ENCODE measurements at regions of chr19 and their contacts with region 1.

Region 1: GRCh38 chr19:33771384-33772101 is 25.1 kb upstream of the KCTD15 start:
- DNase-seq: peak; percentile 78 to 86 (median 83)
- ATAC-seq: peak; percentile 97
- H3K4me3 ChIP-seq: no peak overlapping the region
- H3K27ac ChIP-seq: no peak overlapping the region
- H3K4me1 ChIP-seq: peaks cover 0 to 9% of the 10 kb centered on the region in 2 experiments; a peak in 1 of 5 replicates
- H3K27me3 ChIP-seq: peaks cover 0 to 39% of the 10 kb centered on the region in 2 experiments; a peak in 3 of 5 replicates
- CTCF ChIP-seq: peak; percentile 89 to 94 (median 90)
- EP300 ChIP-seq: no peak
- POLR2A ChIP-seq: no peak
- RAD21 ChIP-seq: peak; percentile 82 to 93

Region 2: DNA sequence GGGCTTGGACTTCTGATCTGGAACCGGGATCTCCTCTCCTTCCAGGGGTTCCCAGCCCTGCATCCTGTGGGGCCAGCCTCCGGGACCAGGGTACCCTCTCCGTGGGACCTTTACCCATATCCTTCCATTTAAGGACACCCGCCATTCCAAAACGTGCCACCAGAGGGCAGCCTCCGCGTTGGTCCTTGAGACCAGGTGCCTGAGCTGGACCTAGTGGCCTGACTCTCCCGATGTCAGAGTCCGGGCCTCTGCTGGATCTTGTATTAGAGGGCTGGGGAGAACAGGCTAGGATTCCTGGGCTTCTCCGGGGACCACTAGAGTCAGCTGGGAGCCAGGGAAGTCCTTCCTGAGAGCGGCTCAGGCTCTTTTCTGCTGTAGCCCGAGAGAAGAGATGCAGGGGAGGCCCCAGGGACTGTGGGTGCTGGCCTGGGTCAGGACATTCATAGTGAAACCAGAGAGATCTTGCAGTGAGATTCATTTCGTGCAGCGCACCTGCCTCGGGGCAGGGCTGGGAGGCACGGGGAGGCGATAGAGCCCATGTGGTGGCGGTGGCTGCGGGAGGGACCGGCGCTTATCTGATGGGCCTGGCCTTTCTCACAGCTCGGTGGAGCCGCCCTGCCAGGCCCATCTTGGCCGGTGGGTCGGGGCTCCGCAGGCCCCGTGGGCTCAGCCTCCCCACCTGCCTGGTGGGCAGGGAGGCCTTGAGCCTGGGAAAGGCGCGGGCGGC is 536.1 kb before region 1 on chr19:
- CTCF ChIA-PET with region 1: no interaction called
- POLR2A ChIA-PET with region 1: no interaction called
- in situ Hi-C with region 1: loop called (anchors 5 kb)
- intact Hi-C with region 1: loop called (anchors 5 kb)
- DNase-seq: peak; percentile 80 to 84 (median 82)
- ATAC-seq: peak; percentile 89
- H3K4me3 ChIP-seq: no peak overlapping the region
- H3K27ac ChIP-seq: no peak overlapping the region
- H3K4me1 ChIP-seq: peaks cover 0 to 10% of the 10 kb centered on the region in 2 experiments; a peak in 2 of 5 replicates
- H3K27me3 ChIP-seq: peaks cover 2 to 39% of the 10 kb centered on the region in 2 experiments; a peak in 3 of 5 replicates
- CTCF ChIP-seq: peak; percentile 85 to 95 (median 91)
- EP300 ChIP-seq: no peak
- POLR2A ChIP-seq: no peak
- RAD21 ChIP-seq: peak; percentile 74 to 85

Region 3: DNA sequence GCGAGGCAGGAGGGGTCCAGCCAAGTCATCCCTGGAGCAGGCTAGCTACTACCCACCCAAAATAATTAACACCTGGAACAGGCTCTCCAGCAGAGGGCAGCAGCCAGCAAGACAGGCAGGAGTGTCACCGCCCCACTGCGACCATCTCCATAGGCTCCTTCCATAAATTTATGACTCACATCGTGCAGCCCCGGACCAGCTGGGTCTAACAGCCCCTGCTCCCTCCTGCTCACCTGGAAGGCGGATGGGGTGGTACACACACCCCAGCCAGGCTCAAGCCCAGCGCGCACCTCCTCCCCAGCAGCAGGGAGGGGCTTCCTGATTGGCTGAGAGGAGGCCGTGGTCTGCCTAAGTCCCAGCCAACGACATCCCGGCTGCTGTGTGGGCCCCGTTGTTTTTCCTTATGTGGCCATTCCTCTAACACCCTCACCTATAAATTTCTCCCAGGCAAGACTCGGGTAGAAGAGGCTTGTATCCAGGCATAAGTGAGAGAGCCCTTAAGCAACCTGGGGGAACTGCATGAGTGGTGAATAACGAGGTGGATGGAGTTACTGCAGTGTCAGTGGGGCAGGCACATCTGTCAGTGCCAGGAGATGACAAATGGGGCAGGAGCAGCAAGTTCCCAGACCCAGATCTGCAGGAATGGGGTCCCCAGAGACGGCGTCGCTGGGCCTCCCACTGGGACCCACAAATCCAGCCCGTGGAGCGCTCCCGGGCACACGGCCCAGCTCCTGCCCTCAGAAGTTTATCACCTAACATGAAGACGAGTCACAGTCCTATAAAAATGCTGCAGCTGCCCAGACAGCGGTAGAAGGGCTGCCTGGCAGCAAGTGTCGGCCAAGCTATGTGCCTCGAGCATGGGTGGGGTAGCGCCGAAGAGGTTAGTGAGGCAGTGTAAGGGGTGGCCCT is 355.0 kb before region 1 on chr19:
- CTCF ChIA-PET with region 1: interaction called, 3 read pairs
- POLR2A ChIA-PET with region 1: interaction called, 3 read pairs
- in situ Hi-C with region 1: loop called (anchors 5 kb)
- intact Hi-C with region 1: loop called (anchors 1 kb)
- DNase-seq: peak; percentile 81 to 88 (median 86)
- ATAC-seq: peak; percentile 96
- H3K4me3 ChIP-seq: no peak overlapping the region
- H3K27ac ChIP-seq: no peak overlapping the region
- H3K4me1 ChIP-seq: peaks cover 0 to 14% of the 10 kb centered on the region in 2 experiments; a peak in 2 of 5 replicates
- H3K27me3 ChIP-seq: peaks cover 0 to 29% of the 10 kb centered on the region in 2 experiments; a peak in 2 of 5 replicates
- CTCF ChIP-seq: peak; percentile 77 to 88 (median 87)
- EP300 ChIP-seq: no peak
- POLR2A ChIP-seq: no peak
- RAD21 ChIP-seq: peak; percentile 30 to 79

Region 4: GRCh38 chr19:33430674-33431277 is 340.8 kb before region 1 on chr19:
- CTCF ChIA-PET with region 1: interaction called, 20 read pairs
- POLR2A ChIA-PET with region 1: interaction called, 5 read pairs
- in situ Hi-C with region 1: no loop called
- intact Hi-C with region 1: loop called (anchors 1 kb)
- DNase-seq: peak; percentile 62 to 77 (median 70)
- ATAC-seq: peak; percentile 99
- H3K4me3 ChIP-seq: no peak overlapping the region
- H3K27ac ChIP-seq: no peak overlapping the region
- H3K4me1 ChIP-seq: peaks cover 0 to 9% of the 10 kb centered on the region in 2 experiments; a peak in 2 of 5 replicates
- H3K27me3 ChIP-seq: peaks cover 4 to 47% of the 10 kb centered on the region in 2 experiments; a peak in 4 of 5 replicates
- CTCF ChIP-seq: peak; percentile 83 to 84 (median 84)
- EP300 ChIP-seq: no peak
- POLR2A ChIP-seq: no peak
- RAD21 ChIP-seq: peak; percentile 59 to 86

Region 5: GRCh38 chr19:33705090-33705847 is 66.3 kb before region 1 on chr19:
- CTCF ChIA-PET with region 1: no interaction called
- POLR2A ChIA-PET with region 1: no interaction called
- in situ Hi-C with region 1: no loop called
- intact Hi-C with region 1: no loop called
- DNase-seq: no peak
- ATAC-seq: no peak
- H3K4me3 ChIP-seq: no peak overlapping the region
- H3K27ac ChIP-seq: no peak overlapping the region
- H3K4me1 ChIP-seq: no peaks in the 10 kb centered on the region
- H3K27me3 ChIP-seq: peaks cover 2 to 23% of the 10 kb centered on the region in 2 experiments; a peak in 3 of 5 replicates
- CTCF ChIP-seq: peak in 2 of 3 experiments; percentile 22 to 33; a peak in 2 of 6 replicates
- EP300 ChIP-seq: no peak
- POLR2A ChIP-seq: no peak
- RAD21 ChIP-seq: peak in 1 of 2 experiments; percentile 39; a peak in 2 of 4 replicates

Region 6: GRCh38 chr19:33752945-33753344 is 18.6 kb before region 1 on chr19:
- CTCF ChIA-PET with region 1: no interaction called
- POLR2A ChIA-PET with region 1: no interaction called
- in situ Hi-C with region 1: no loop called
- intact Hi-C with region 1: no loop called
- DNase-seq: no peak
- ATAC-seq: no peak
- H3K4me3 ChIP-seq: no peak overlapping the region
- H3K27ac ChIP-seq: no peak overlapping the region
- H3K4me1 ChIP-seq: no peaks in the 10 kb centered on the region
- H3K27me3 ChIP-seq: peaks cover 2 to 43% of the 10 kb centered on the region in 2 experiments; a peak in 4 of 5 replicates
- CTCF ChIP-seq: no peak
- EP300 ChIP-seq: no peak
- POLR2A ChIP-seq: no peak
- RAD21 ChIP-seq: no peak

Region 7: GRCh38 chr19:33864311-33864850 is 92.8 kb after region 1 on chr19:
- CTCF ChIA-PET with region 1: no interaction called
- POLR2A ChIA-PET with region 1: no interaction called
- in situ Hi-C with region 1: no loop called
- intact Hi-C with region 1: no loop called
- DNase-seq: no peak
- ATAC-seq: no peak
- H3K4me3 ChIP-seq: no peak overlapping the region
- H3K27ac ChIP-seq: no peak overlapping the region
- H3K4me1 ChIP-seq: no peaks in the 10 kb centered on the region
- H3K27me3 ChIP-seq: peaks cover 13 to 26% of the 10 kb centered on the region in 2 experiments; a peak in 3 of 5 replicates
- CTCF ChIP-seq: no peak
- EP300 ChIP-seq: no peak
- POLR2A ChIP-seq: no peak
- RAD21 ChIP-seq: no peak

Measured in K562 (cell line).